Dorsolateral prefrontal cortex (tissue), 120 donors: ENCODE measurements at regions of chr1 and their contacts with region 1.

Region 1: DNA sequence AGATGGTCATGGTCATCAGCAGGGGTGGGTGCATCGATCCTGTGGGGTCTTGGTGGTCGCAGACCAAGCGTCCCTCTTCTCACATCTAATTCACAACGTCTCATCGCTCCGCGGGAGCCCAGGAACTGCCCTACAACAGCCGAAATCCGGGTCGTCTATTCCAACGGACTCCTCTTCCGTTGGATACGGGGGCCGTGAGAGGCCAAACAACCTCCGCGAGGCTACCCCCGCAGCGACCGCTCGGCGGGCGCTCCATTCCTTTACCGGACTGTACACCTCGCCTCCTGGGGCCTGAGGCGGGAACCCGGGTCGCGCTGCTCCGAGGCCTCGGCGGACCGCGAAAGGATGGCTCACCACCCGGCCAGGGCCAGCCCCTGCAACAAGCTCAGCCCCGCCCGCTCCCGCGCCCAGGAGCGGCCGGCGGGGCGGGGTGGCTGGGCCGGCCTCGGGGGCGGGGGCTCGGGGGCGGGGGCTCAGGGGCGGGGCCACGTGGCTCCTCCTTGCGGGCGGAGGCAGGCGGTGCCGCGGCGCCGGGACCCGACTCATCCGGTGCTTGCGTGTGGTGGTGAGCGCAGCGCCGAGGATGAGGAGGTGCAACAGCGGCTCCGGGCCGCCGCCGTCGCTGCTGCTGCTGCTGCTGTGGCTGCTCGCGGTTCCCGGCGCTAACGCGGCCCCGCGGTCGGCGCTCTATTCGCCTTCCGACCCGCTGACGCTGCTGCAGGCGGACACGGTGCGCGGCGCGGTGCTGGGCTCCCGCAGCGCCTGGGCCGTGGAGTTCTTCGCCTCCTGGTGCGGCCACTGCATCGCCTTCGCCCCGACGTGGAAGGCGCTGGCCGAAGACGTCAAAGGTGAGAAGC is at the start of gene QSOX1:
- DNase-seq: peak; percentile 81 to 92 (median 90)
- H3K4me3 ChIP-seq: peak within 1 kb of the TSS; percentile 71 to 100 (median 97)
- H3K27ac ChIP-seq: peak within 1 kb of the TSS; percentile 65 to 98 (median 88)
- H3K27me3 ChIP-seq: no peaks in the 10 kb centered on the region
- CTCF ChIP-seq: peak in 43 of 56 donors; percentile 12 to 75 (median 43)
- total RNA-seq, gene QSOX1: 33.6 to 62.6 (median 46.1) TPM

Region 2: GRCh38 chr1:179882243-179883039 is 272.1 kb before region 1 on chr1 and contains the start of gene TOR1AIP1:
- intact Hi-C with region 1: loop called (anchors 1 to 5 kb)
- DNase-seq: peak; percentile 89 to 97 (median 96)
- H3K4me3 ChIP-seq: peak within 1 kb of the TSS; percentile 59 to 97 (median 86)
- H3K27ac ChIP-seq: peak within 1 kb of the TSS; percentile 92 to 100 (median 100)
- H3K27me3 ChIP-seq: no peaks in the 10 kb centered on the region
- CTCF ChIP-seq: peak in 49 of 56 donors; percentile 12 to 64 (median 41)
- total RNA-seq, gene TOR1AIP1: 35.1 to 73.4 (median 45.9) TPM

Region 3: GRCh38 chr1:179954493-179955297 is 199.9 kb before region 1 on chr1 and contains the start of gene CEP350:
- intact Hi-C with region 1: loop called (anchors 2 to 5 kb)
- DNase-seq: peak; percentile 90 to 98 (median 96)
- H3K4me3 ChIP-seq: peak within 1 kb of the TSS; percentile 66 to 99 (median 93)
- H3K27ac ChIP-seq: peak within 1 kb of the TSS; percentile 52 to 99 (median 94)
- H3K27me3 ChIP-seq: no peaks in the 10 kb centered on the region
- CTCF ChIP-seq: peak in 37 of 56 donors; percentile 3 to 47 (median 22)
- total RNA-seq, gene CEP350: 49.3 to 111 (median 81.4) TPM

Region 4: DNA sequence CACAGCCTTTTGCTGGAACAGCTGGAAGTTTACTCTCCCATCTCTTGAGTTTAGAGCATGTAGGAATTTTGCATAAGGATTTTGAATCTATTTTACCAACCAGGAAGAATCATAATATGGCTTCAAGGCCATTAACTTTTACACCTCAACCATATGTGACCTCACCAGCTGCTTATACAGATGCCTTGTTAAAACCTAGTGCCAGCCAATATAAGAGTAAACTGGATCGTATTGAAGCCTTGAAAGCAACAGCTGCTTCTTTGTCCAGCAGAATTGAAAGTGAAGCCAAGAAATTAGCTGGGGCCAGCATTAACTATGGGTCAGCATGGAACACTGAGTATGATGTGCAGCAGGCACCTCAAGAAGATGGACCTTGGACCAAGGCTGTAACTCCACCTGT is 134.5 kb before region 1 on chr1:
- intact Hi-C with region 1: no loop called
- DNase-seq: no peak
- H3K4me3 ChIP-seq: no peak overlapping the region
- H3K27ac ChIP-seq: peak overlapping the region in 1 of 59 donors; percentile 12
- H3K27me3 ChIP-seq: no peaks in the 10 kb centered on the region
- CTCF ChIP-seq: no peak